ENCODE measurements at regions of chr6 and their contacts with region 1.

Region 1: DNA sequence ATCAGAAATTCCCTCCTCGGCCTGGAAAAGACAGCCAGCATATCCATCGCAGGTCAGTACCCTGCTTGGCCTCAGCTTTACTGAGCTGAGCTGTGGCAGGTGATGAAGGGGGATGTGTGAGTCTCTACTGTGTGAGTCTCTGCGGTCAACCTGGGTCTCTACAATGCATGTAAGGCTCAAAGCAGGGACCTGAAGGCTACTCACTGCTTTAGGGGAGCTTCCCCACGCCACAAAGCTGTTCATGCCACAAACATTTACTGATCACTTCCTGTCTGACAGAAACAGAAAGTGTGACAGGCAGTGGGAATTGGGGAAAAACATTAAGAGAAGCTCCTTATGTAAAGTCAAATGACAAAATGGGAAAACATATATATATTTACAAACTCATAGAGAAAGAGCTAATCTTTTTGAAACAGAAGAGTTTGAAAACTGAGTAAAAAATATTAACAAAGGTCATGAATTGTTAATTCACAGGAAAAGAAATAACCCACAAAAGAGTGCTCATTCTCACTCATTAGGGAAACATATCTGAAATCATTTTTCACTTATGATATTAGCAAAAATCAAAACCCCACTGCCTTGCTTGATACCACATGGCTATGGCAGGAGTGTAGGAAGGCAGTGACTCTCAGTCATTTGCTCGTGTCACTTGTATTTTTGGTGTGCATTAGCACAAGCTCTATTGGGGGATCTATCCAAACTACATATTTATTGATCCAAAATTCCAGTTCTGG is 5.8 kb downstream of the BTN3A3 start:
- DNase-seq: no peak
- H3K4me3 ChIP-seq: no peak overlapping the region
- H3K27me3 ChIP-seq: no peaks in the 10 kb centered on the region; the same call in 1 of the 2 replicates
- CTCF ChIP-seq: no peak

Region 2: DNA sequence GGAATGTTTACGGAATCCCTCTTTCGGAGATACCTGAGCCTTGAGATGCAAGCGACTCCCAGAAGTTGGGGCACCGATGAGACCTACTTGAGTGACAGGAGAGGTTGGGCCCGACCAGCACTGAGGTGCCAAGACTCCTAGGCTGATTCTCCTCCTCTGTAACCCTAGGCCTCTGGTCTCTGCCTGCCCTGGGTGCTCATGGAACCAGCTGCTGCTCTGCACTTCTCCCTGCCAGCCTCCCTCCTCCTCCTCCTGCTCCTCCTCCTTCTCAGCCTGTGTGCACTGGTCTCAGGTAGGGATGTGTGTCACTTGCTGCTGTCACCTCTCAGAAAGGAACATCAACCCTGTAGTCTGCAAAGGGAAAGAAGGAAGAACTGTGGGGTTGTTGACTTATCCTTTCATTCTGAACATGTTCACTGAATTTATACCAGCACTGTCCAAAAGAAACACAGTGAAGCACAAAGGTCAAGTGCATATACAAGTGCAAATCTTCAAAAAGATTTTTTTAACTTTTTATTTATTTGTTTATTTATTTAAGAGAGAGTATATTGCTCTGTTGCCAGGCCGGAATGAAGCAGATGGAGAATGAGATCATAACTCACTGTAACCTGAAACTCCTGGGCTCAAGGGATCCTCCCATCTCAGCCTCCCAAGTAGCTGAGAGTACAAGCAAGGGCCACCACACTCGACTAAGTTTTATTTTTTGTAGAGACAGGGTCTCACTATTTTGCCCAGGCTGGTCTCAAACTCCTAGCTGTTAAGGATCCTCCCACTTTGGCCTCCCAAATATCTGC is 62.3 kb before region 1 on chr6:
- CTCF ChIA-PET with region 1: no interaction called
- POLR2A ChIA-PET with region 1: interaction called, 15 read pairs
- DNase-seq: no peak
- H3K4me3 ChIP-seq: peak overlapping the region; percentile 82
- H3K27me3 ChIP-seq: no peaks in the 10 kb centered on the region
- CTCF ChIP-seq: no peak